ENCODE measurements at regions of chr1 and their contacts with region 1.

Region 1: GRCh38 chr1:30929135-30929889 is 20.8 kb upstream of the SDC3 start:
- DNase-seq: no peak
- ATAC-seq: peak; percentile 31 to 83 (median 66)
- H3K4me3 ChIP-seq: no peak overlapping the region
- H3K27ac ChIP-seq: peak overlapping the region in 1 of 10 donors; percentile 44
- H3K4me1 ChIP-seq: peaks cover 0 to 10% (median 0%) of the 10 kb centered on the region in 9 donors
- H3K27me3 ChIP-seq: peaks cover 0 to 7% (median 0%) of the 10 kb centered on the region in 7 donors
- CTCF ChIP-seq: peak; percentile 36 to 76 (median 71)

Region 2: GRCh38 chr1:30779294-30780071 is 149.8 kb before region 1 on chr1:
- intact Hi-C with region 1: loop called in 1 of 10 experiments (anchors 5 kb)
- DNase-seq: peak; percentile 78 to 86
- ATAC-seq: peak; percentile 53 to 81 (median 74)
- H3K4me3 ChIP-seq: no peak overlapping the region
- H3K27ac ChIP-seq: peak overlapping the region in 1 of 10 donors; percentile 80
- H3K4me1 ChIP-seq: peaks cover 0 to 49% (median 4%) of the 10 kb centered on the region in 9 donors
- H3K27me3 ChIP-seq: peaks cover 0 to 14% (median 0%) of the 10 kb centered on the region in 7 donors
- CTCF ChIP-seq: peak; percentile 91 to 98 (median 96)

Region 3: DNA sequence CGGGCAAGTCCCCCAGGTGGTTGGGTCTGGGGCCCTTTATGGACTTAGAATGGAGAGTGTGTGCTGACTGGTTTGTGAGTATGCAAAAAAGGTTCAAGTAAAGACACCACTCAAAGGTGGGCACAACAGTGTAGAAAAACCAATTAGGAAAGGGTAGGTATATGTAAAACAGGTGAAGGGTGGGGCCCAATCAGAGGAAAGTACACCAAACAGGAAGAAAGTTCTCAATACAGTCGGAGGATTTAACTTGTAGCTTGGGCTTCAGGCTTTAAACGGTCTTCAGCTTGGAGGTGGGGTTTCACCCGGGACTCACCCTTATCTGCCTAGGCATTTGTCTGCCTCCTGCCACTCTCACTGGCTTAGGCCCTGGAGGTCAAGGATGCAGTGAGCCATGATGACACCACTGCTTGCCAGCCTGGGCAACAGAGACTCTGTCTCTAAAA is 143.0 kb after region 1 on chr1:
- intact Hi-C with region 1: no loop called
- DNase-seq: no peak
- ATAC-seq: no peak
- H3K4me3 ChIP-seq: no peak overlapping the region
- H3K27ac ChIP-seq: no peak overlapping the region
- H3K4me1 ChIP-seq: peaks cover 0 to 8% (median 0%) of the 10 kb centered on the region in 9 donors
- H3K27me3 ChIP-seq: no peaks in the 10 kb centered on the region
- CTCF ChIP-seq: no peak

Measured in heart right ventricle (tissue), 16 donors.